ENCODE measurements at regions of chr10 and their contacts with region 1.

Region 1: DNA sequence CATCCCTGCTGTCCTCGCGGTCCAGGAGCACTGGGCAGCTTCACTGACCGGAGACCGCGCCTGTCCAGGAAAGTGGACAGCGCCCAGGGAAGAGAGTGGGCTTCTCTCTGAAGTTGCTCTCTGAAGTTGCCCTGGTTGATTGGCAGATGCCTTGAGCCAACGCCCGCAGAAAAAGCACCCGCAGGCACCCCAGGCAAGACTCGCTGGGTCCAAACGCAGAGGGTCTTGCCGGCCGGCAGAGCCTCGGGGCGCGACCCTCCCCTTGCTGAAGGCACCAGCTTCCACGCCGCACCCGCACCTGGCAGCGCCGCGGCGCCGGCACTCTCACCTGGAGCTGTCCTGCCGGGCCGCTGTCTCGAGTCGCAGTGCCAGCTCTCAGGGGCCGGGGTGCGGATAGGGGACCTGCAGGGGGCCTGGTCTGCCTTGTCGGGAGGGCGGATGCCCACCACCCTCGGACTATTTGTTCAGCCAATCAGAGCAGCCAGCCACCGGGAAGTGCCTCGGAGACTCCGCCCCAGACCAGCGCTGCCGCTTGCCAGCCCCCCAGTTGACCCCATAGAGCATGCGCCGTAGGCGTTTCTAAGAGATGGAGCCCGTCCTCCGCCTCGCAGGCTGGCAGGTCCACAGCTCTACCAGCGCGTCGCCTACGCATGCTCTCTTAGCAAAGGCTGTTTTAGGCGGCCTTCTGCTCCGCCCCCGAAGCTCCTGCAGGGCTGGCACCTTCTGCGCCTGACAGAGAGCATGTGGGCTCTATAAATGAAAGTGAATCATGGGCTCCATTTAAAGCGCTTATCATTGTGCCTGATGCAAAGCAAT is at the start of gene LIPA:
- DNase-seq: peak; percentile 96 to 98 (median 97)
- ATAC-seq: peak; percentile 99 to 100 (median 99)
- H3K4me3 ChIP-seq: peak within 1 kb of the TSS; percentile 70 to 99 (median 88)
- H3K27ac ChIP-seq: peak within 1 kb of the TSS in 11 of 12 donors; percentile 68 to 90 (median 82)
- H3K4me1 ChIP-seq: peaks cover 0 to 36% (median 7%) of the 10 kb centered on the region in 12 donors
- H3K27me3 ChIP-seq: no peaks in the 10 kb centered on the region
- CTCF ChIP-seq: no peak
- POLR2A ChIP-seq: peak in 1 of 2 donors; percentile 54
- total RNA-seq, gene LIPA: 13.6 to 127 (median 18.8) TPM

Region 2: DNA sequence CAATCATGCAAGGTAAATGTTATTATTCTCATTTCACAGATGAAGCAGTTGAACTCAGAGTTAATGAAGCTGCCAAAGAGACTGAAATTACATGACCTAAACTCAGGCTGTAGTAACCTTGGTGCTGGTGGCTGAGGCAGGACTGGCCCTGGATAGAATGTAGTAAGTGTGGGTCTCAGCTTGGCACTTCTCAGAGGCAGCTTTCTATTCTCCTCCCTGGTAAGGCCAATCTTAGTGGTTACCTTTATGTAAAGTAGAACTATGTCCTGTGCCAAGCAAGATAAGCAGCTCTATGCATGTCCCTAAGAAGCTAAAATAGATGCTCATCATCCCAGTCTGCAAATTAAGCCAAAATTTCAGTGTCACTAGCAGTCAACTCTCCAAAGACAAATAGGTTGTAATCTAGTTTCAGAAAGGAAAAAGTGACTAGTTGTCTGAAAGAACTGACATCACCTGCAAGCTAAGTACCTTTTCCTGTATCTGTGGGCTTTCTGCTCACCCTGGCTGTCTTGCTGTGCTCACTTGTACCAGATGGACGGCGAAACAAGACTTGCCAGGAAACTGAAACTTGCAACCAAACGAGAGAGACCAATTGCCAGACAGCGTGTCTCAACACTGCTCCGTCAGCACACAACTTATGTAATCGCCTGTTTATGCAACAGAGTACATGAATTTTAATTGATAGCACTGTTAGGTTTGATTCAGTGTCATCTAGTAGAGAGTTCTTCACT is 88.2 kb before region 1 on chr10:
- intact Hi-C with region 1: no loop called
- DNase-seq: peak in 4 of 5 donors; percentile 23 to 37 (median 28)
- ATAC-seq: peak in 3 of 4 donors; percentile 49 to 74 (median 55)
- H3K4me3 ChIP-seq: peak overlapping the region in 2 of 12 donors; percentile 20 to 22
- H3K27ac ChIP-seq: peak overlapping the region in 3 of 12 donors; percentile 33 to 85 (median 43)
- H3K4me1 ChIP-seq: peaks cover 0 to 21% (median 0%) of the 10 kb centered on the region in 12 donors
- H3K27me3 ChIP-seq: no peaks in the 10 kb centered on the region
- CTCF ChIP-seq: no peak
- POLR2A ChIP-seq: no peak

Region 3: GRCh38 chr10:89414146-89414878 is 162.7 kb after region 1 on chr10 and contains the start of gene IFIT5:
- intact Hi-C with region 1: loop called in 1 of 10 experiments (anchors 10 kb)
- DNase-seq: peak; percentile 74 to 87 (median 78)
- ATAC-seq: peak; percentile 79 to 95 (median 92)
- H3K4me3 ChIP-seq: peak within 1 kb of the TSS; percentile 75 to 95 (median 86)
- H3K27ac ChIP-seq: peak within 1 kb of the TSS; percentile 92 to 99 (median 96)
- H3K4me1 ChIP-seq: peaks cover 0 to 53% (median 33%) of the 10 kb centered on the region in 12 donors
- H3K27me3 ChIP-seq: no peaks in the 10 kb centered on the region
- CTCF ChIP-seq: peak in 3 of 12 donors; percentile 23 to 30 (median 25)
- POLR2A ChIP-seq: peak in 1 of 2 donors; percentile 38
- total RNA-seq, gene IFIT5: 5.4 to 21.0 (median 10.4) TPM

Measured in heart left ventricle (tissue), 16 donors.